ENCODE measurements at regions of chr6 and their contacts with region 1.

Region 1: GRCh38 chr6:37691904-37692806 is 5.5 kb downstream of the MDGA1 start:
- DNase-seq: no peak
- H3K4me3 ChIP-seq: no peak overlapping the region
- H3K27ac ChIP-seq: no peak overlapping the region
- H3K4me1 ChIP-seq: peaks cover 30% of the 10 kb centered on the region
- H3K27me3 ChIP-seq: no peaks in the 10 kb centered on the region
- CTCF ChIP-seq: peak; percentile 85 to 93 (median 85)
- POLR2A ChIP-seq: no peak

Region 2: GRCh38 chr6:37473397-37474095 is 218.6 kb before region 1 on chr6:
- intact Hi-C with region 1: loop called (anchors 10 kb)
- DNase-seq: peak in 1 of 2 donors; percentile 91
- H3K4me3 ChIP-seq: no peak overlapping the region
- H3K27ac ChIP-seq: no peak overlapping the region
- H3K4me1 ChIP-seq: peaks cover 12% of the 10 kb centered on the region
- H3K27me3 ChIP-seq: no peaks in the 10 kb centered on the region
- CTCF ChIP-seq: no peak
- POLR2A ChIP-seq: no peak